Psoas muscle (tissue), 8 donors: ENCODE measurements at regions of chr19 and their contacts with region 1.

Region 1: GRCh38 chr19:17784201-17785008 is 10.5 kb upstream of the B3GNT3 start:
- DNase-seq: peak in 1 of 2 donors; percentile 49
- ATAC-seq: peak in 3 of 4 donors; percentile 28 to 47 (median 31)
- H3K4me3 ChIP-seq: no peak overlapping the region
- H3K27ac ChIP-seq: no peak overlapping the region
- H3K4me1 ChIP-seq: no peaks in the 10 kb centered on the region
- H3K27me3 ChIP-seq: peaks cover 0 to 23% (median 13%) of the 10 kb centered on the region in 3 donors
- CTCF ChIP-seq: peak; percentile 61

Region 2: DNA sequence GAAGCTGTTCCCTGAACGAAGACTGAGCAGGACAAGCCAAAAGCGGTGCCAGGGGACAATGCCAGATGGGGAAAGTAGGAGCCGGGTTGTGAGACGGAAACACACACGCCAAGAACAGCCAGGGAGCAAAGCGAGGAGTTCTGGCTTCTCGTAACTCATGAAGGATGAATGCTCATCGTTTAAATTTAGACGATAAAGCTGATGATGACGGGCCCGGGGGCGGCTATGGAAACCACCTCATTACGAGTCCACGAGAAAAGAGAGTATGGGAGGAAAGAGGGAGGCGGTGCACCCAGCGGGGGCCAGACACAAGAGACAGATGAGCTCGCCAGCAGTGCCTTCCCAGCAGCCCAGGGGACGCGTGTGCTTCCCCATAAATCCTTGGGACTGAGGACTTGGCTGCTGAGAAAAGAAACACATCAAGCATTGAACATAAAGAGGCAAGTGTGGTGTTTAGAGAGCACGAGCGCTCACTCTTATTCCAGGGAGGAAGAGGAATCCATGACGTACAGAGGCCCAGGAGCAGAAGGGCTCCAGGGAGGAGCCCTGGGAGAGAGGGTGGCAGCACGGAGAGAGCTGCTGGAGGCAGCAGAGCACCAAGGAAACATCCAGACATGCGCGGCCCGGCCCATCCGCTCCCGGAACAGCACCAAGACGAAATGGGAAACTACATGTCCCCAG is 1383.4 kb before region 1 on chr19:
- intact Hi-C with region 1: loop called in 1 of 2 experiments (anchors 5 kb)
- DNase-seq: peak; percentile 67 to 87
- ATAC-seq: peak; percentile 81 to 89 (median 85)
- H3K4me3 ChIP-seq: no peak overlapping the region
- H3K27ac ChIP-seq: peak overlapping the region; percentile 76
- H3K4me1 ChIP-seq: peaks cover 15% of the 10 kb centered on the region
- H3K27me3 ChIP-seq: no peaks in the 10 kb centered on the region
- CTCF ChIP-seq: no peak